Activated CD4-positive, alpha-beta T cell treated with anti-CD3 and anti-CD28 coated beads, Interleukin-2, amount 10 ng/mL, durations not matched to agents 24 days and 14 days (primary cell): ENCODE measurements at regions of chr2 and their contacts with region 1.

Region 1: DNA sequence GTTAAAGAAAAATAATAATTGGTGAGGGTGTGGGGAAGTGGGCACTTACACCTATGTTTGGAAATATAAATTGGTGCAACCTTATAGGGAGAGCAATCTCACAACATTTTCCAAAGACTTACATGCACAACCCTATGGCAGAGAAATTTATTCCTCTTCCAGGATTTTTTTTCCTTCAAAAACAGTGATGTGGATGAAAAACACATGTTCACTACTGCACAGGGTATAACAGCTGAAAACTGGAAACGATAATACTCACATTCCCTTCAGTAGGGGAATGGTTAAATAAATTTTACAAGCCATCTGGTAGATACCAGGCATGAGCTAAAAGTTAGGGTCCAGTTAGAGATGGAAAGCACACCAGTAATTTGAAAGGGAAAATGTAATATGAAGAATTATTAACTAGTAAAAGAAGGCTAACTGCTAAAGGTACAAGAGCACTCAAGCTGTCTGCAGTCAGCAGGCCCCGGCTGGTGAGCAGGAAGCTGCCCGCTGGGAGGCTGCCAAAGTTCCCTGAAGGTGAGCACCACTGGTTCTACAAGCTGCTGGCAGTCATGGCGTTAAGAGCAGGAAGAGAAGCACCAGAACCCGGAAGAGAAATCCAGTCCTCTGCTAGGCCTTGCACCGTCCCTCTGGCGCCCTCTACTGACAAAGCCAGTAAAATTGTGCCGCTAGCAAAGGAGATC is 28.4 kb upstream of the CASP8 start:
- DNase-seq: peak; percentile 97
- H3K4me3 Mint-ChIP-seq: peak overlapping the region; percentile 78
- H3K27ac Mint-ChIP-seq: peak overlapping the region; percentile 91
- H3K4me1 Mint-ChIP-seq: peaks cover 47% of the 10 kb centered on the region
- H3K27me3 Mint-ChIP-seq: no peaks in the 10 kb centered on the region

Region 2: DNA sequence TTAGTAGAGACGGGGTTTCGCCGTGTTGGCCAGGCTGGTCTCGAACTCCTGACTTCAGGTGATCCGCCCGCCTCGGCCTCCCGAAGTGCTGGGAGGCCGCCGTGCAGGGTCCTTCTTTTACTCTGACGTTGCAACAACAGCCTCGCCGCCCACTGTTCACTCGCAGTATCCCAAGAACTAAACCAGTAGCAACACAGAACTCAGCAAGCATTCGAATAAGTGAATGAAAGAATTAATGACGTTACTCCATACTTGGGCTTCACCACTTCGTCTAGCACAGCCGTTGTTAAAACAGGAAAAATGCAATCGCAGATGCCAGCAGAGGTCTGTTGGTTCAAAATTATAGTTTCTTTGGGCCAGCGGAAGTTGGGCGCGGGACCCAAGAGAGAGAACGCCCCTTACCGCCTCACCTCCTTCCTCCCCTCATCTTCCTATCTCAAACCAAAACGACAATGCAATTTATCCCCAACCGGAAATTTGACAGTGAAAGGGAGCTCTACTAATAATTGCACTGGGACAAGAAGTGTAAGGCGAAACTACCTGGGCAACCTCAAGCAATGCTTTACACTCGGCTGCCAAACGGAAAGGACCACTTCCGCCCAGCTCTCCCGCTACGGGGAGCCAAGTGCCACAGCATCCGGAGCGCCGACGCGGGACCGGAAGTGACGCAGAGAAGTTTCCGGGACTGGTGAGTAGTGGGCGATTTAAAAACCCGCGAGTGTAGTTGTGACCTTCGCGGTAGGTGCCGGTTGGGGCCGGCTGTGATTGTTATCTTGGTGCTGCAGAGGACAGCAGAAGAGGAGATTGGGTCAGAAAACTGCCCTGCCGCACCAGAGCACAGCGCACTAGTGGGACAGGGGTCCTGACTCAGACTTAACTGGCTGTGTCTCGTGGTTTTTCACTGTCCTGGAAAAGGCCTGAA is 343.0 kb before region 1 on chr2 and contains the starts of genes NIF3L1 and PPIL3:
- intact Hi-C with region 1: loop called (anchors 1 kb)
- DNase-seq: peak; percentile 99
- H3K4me3 Mint-ChIP-seq: peak within 1 kb of the TSS; percentile 92
- H3K27ac Mint-ChIP-seq: peak within 1 kb of the TSS; percentile 99
- H3K4me1 Mint-ChIP-seq: peaks cover 46% of the 10 kb centered on the region
- H3K27me3 Mint-ChIP-seq: no peaks in the 10 kb centered on the region
- total RNA-seq, gene NIF3L1: 30.7 and 33.4 TPM in 2 replicates
- total RNA-seq, gene PPIL3: 52.6 and 52.8 TPM in 2 replicates

Region 3: DNA sequence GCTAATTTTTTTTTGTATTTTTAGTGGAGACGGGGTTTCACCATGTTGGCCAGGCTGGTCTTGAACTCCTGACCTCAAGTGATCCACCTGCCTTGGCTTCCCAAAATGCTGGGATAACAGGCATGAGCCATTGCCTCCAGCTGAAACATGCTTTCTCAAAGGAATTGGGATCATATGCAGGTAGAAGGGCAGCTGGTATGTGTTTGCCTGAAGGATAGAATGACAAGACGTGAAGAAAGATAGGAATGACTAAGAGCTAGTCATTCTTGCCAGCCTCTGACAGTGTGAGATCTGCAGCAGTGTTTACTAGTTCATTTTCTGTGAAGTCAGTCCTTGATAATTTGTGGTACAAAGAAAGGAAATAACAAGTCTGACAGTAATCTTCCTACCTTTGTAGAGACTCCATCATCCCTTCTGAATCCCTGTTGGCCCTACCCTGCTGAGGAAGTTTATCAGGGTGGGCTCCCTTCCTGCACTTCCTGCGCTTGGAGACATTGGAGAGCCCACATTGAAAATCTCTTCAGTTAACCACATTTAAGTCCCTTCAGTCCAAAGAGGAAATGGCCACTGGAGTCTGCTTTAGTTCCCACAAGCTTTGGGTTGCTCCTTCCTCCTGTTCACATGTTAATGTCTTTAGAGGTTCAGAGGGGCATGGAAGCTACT is 101.3 kb before region 1 on chr2:
- intact Hi-C with region 1: loop called (anchors 2 kb)
- DNase-seq: peak; percentile 80
- H3K4me3 Mint-ChIP-seq: peak overlapping the region; percentile 81
- H3K27ac Mint-ChIP-seq: peak overlapping the region; percentile 100
- H3K4me1 Mint-ChIP-seq: peaks cover 51% of the 10 kb centered on the region
- H3K27me3 Mint-ChIP-seq: no peaks in the 10 kb centered on the region

Region 4: GRCh38 chr2:201257956-201258665 is 26.2 kb after region 1 on chr2:
- intact Hi-C with region 1: loop called (anchors 1 kb)
- DNase-seq: peak; percentile 98
- H3K4me3 Mint-ChIP-seq: peak overlapping the region; percentile 100
- H3K27ac Mint-ChIP-seq: peak overlapping the region; percentile 98
- H3K4me1 Mint-ChIP-seq: peaks cover 71% of the 10 kb centered on the region
- H3K27me3 Mint-ChIP-seq: no peaks in the 10 kb centered on the region

Region 5: DNA sequence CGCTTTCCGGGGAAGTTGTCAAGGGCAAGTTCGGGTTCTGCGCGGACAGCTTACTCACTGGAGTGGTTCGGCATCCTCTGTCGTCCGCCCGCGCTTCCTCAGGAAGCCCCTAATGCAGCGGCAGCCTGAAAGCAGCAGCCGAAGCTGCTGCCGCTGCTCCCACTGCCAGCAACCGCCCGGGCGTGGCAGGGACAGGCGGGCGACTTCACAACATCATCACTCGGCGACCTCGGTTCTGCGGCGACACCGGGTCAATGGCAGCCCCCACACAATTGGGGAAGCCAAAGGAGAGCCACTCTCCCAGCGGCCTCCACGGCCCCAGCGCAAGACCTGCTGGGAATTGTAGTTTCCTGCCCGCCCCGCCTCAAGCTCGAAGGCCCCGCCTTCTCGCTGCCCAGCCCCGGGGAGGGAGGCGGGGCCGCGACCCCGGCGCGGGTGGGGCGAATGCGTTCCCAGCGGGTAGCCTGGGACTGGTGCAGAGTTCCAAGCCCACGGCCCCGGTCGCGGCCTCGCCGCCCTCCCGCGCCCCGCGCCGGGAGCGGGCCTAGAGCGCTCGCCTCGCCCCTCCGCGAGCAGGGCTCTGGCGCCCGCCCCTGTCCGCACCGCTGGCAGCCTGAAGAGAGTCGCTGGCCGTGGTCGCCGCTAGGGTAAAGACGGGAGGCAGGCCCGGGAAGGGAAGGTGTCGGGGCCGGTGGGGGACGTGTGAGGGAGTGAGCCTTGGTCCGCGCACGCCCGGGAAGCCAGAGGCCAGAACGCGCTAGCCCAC is 219.6 kb after region 1 on chr2 and contains the starts of genes STRADB and TRAK2:
- intact Hi-C with region 1: loop called (anchors 1 kb)
- DNase-seq: peak; percentile 99
- H3K4me3 Mint-ChIP-seq: peak within 1 kb of the TSS; percentile 95
- H3K27ac Mint-ChIP-seq: peak within 1 kb of the TSS; percentile 97
- H3K4me1 Mint-ChIP-seq: peaks cover 42% of the 10 kb centered on the region
- H3K27me3 Mint-ChIP-seq: peaks cover 8% of the 10 kb centered on the region
- total RNA-seq, gene STRADB: 18.5 and 20.1 TPM in 2 replicates
- total RNA-seq, gene TRAK2: 26.5 and 29.1 TPM in 2 replicates

Region 6: GRCh38 chr2:201580486-201580885 is 348.6 kb after region 1 on chr2:
- intact Hi-C with region 1: no loop called
- DNase-seq: no peak
- H3K4me3 Mint-ChIP-seq: no peak overlapping the region
- H3K27ac Mint-ChIP-seq: no peak overlapping the region
- H3K4me1 Mint-ChIP-seq: no peaks in the 10 kb centered on the region
- H3K27me3 Mint-ChIP-seq: peaks cover 12% of the 10 kb centered on the region

Region 7: GRCh38 chr2:202178342-202178958 is 946.5 kb after region 1 on chr2:
- intact Hi-C with region 1: loop called (anchors 2 kb)
- DNase-seq: peak; percentile 87
- H3K4me3 Mint-ChIP-seq: no peak overlapping the region
- H3K27ac Mint-ChIP-seq: no peak overlapping the region
- H3K4me1 Mint-ChIP-seq: peaks cover 5% of the 10 kb centered on the region
- H3K27me3 Mint-ChIP-seq: peaks cover 9% of the 10 kb centered on the region